Uterus (tissue), 4 donors: ENCODE measurements at regions of chr1 and their contacts with region 1.

Region 1: GRCh38 chr1:211578640-211579433 is at the start of gene SLC30A1:
- DNase-seq: peak; percentile 99
- H3K4me3 ChIP-seq: peak within 1 kb of the TSS; percentile 60 to 97
- H3K27ac ChIP-seq: peak within 1 kb of the TSS; percentile 96 to 98
- H3K4me1 ChIP-seq: no peaks in the 10 kb centered on the region
- H3K27me3 ChIP-seq: no peaks in the 10 kb centered on the region
- CTCF ChIP-seq: peak in 1 of 4 experiments; percentile 18
- POLR2A ChIP-seq: peak; percentile 92 to 95
- total RNA-seq, gene SLC30A1: 12.8 to 44.7 (median 19.1) TPM

Region 2: DNA sequence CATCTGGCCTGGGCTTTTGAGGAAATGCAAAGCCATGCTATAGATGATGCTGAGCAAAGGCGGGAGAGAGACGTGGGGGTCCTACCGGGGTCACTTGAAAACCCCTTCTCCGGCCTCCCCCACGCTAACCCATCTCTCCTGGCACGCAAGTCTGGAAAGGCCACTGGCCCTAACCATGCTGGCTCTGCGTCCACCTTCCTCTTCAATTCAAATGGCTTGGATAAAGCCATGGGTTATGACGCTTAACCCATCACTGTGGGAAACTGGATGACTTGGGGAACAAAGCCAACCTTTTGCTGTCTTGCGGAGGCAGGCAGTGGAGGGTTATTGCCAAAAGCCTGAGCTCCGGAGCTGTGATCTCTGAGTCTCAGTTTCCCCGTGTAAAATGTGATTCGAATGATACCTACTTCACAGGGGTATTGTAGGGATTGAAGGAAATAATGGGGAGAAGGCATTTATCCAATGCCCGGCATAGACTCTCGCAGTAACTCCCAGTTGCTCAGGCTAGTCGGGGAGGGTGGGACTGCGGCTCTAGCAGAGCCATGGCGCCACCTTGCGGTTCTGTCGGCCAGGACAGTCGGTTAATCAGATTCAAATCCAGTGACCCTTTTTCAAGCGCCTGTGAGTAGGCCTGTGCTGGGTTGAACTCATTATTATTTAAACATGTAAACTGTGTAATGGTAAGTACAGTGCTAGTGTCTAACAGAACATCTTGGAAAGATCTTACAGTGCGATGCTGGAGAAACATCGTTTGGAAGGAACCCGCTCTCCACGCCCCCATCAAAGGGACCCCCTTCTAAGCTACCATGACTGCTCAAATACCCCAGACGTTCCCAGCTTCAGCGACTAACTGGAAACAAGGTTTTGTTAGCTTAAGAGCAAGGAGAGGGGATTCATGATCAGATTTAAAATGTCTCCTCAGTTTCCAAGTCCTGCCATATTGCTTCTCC is 76.3 kb after region 1 on chr1:
- intact Hi-C with region 1: loop called (anchors 10 kb)
- DNase-seq: peak; percentile 87
- H3K4me3 ChIP-seq: no peak overlapping the region
- H3K27ac ChIP-seq: no peak overlapping the region
- H3K4me1 ChIP-seq: no peaks in the 10 kb centered on the region
- H3K27me3 ChIP-seq: no peaks in the 10 kb centered on the region
- CTCF ChIP-seq: peak; percentile 87 to 98 (median 90)
- POLR2A ChIP-seq: no peak

Region 3: GRCh38 chr1:211684791-211685190 is 106.0 kb after region 1 on chr1:
- intact Hi-C with region 1: no loop called
- DNase-seq: no peak
- H3K4me3 ChIP-seq: no peak overlapping the region
- H3K27ac ChIP-seq: no peak overlapping the region
- H3K4me1 ChIP-seq: no peaks in the 10 kb centered on the region
- H3K27me3 ChIP-seq: no peaks in the 10 kb centered on the region
- CTCF ChIP-seq: no peak
- POLR2A ChIP-seq: no peak